GM10248 (cell line): ENCODE measurements at regions of chr1 and their contacts with region 1.

Region 1: GRCh38 chr1:19651141-19651737 is 7.1 kb downstream of the NBL1 start:
- DNase-seq: peak; percentile 77
- CTCF ChIP-seq: peak; percentile 85

Region 2: GRCh38 chr1:19390901-19391595 is 260.2 kb before region 1 on chr1:
- CTCF ChIA-PET with region 1: interaction called, 11 read pairs
- POLR2A ChIA-PET with region 1: no interaction called
- DNase-seq: peak; percentile 77
- CTCF ChIP-seq: peak; percentile 72

Region 3: DNA sequence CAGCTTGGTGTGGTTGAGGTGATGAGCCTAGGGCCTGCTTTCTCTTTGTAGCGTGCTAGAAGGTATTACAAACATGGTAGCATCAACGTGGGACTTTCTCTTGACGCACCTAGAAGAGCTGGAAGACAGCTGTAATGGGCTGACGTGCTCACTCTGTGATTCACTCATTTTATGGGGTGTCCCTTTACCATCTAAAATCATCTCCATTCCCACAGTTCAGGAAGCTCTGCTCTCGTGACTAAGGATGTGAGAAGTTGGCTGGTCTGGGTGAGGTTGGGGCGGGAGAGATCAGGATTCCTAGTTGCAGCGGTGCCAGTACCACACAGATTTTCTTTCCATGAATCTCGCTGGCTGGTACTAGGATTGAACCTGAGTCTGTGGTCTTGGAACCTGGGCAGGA is 17.7 kb after region 1 on chr1:
- CTCF ChIA-PET with region 1: interaction called, 46 read pairs
- POLR2A ChIA-PET with region 1: no interaction called
- DNase-seq: no peak
- CTCF ChIP-seq: no peak

Region 4: DNA sequence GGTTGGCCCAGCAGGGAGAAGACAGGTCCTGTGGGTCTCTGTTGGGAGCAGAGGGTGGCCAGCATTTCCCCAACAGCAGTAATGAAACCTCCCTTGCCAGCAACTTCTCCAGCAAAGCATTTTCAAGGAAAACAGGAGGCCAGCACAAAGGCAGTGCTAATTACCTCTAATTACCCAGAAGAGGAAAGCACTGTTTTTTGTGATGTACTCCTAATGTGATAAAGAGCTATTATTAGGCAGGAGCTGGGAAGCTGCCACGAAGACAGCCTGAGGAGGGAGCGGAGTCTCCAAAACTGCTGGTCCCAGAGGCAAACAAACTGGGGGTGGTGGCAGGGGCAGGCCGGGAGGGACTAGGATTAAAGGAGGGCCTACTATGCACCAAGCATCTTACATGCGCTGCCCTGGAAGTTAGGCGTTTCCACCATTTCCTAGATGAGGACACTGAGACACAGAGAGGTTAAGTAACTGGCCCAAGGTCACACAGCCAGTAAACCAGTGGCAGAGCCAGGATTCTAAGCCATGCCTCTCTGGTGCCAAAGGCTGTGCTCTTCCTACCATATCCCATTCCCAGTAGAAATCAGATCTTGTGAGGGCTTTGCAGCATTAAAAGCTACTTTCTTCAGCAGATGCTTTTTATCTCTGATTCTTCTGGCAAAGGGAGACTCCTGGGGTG is 38.0 kb after region 1 on chr1:
- CTCF ChIA-PET with region 1: no interaction called
- POLR2A ChIA-PET with region 1: no interaction called
- DNase-seq: no peak
- CTCF ChIP-seq: no peak